ENCODE measurements at regions of chr7 and their contacts with region 1.

Region 1: DNA sequence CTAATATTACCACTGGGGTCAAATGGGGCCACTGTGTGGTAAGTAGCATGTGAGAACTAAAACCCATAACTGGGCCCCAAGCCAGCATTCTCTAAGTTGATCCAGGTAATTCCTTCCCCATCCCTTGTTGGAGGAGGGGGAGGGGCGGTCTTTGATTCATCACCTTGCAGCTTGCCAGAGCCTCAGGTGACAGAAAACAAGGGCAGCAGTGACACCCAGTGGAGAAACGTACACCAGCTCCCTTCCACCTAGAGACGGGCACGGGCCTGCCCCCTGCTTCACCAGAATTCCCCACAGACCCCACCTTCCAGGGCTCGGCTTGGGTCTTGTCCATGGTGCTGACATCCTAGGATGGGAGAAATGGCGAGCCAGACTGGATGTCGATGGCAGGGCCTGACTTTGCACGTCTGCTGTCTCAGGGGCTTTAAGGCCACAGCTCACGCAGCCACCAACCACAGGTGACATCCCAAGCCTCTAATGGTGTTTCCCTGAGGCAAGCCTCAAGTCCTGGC is 102.0 kb downstream of the STRA8 start:
- DNase-seq: peak; percentile 93 to 95
- H3K4me3 ChIP-seq: no peak overlapping the region
- H3K27ac ChIP-seq: no peak overlapping the region
- H3K4me1 ChIP-seq: peaks cover 0 to 4% (median 2%) of the 10 kb centered on the region in 4 experiments; a peak in 5 of 7 replicates
- H3K27me3 ChIP-seq: no peaks in the 10 kb centered on the region
- CTCF ChIP-seq: peak; percentile 90 to 98 (median 95)
- EP300 ChIP-seq: peak in 1 of 2 experiments; percentile 32; a peak in 1 of 3 replicates
- POLR2A ChIP-seq: no peak
- RAD21 ChIP-seq: peak; percentile 99 to 100

Region 2: DNA sequence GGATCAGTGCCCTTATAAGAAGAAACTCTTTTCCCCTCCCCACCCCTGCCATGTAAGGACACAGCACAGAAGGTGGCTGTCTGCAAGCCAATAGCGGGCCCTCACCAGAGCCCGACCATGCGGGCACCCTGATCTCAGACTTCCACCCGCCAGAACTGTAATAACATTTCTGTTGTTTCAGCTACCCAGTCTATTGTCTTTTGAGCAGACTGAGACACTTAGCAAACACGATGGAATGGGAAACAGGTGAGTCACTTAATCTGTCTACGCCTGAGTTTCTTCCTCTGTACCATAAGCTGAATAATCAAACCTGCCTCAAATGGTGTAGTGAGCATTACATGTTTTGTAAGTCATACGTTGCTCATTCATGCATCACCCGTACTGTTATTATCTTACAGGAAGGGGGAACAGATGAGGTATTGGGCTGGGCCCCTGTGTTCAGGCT is 43.9 kb before region 1 on chr7:
- CTCF ChIA-PET with region 1: interaction called, 34 read pairs
- POLR2A ChIA-PET with region 1: no interaction called
- DNase-seq: no peak
- H3K4me3 ChIP-seq: no peak overlapping the region
- H3K27ac ChIP-seq: no peak overlapping the region
- H3K4me1 ChIP-seq: no peaks in the 10 kb centered on the region
- H3K27me3 ChIP-seq: no peaks in the 10 kb centered on the region
- CTCF ChIP-seq: no peak
- EP300 ChIP-seq: no peak
- POLR2A ChIP-seq: no peak
- RAD21 ChIP-seq: no peak

Region 3: DNA sequence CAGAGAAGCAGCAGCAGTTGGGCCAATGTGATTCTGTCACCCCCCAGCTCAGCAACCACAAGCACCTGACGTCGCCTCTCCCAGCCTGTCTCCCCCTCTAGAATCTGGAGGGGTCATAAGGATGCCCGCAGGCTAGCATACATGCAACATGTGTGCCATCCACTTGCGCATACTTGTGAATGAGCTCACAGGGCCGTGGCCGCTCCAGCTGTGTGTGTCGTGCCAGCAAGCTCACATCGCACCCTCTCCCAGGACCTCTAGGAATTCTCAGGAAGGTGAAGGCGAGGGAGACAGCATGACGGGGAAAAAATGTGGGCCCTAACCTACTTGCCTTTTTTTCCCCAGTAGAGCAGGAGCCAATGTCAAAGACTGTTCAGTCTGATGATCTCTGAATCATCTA is 21.7 kb before region 1 on chr7:
- CTCF ChIA-PET with region 1: interaction called, 17 read pairs
- POLR2A ChIA-PET with region 1: no interaction called
- DNase-seq: no peak
- H3K4me3 ChIP-seq: no peak overlapping the region
- H3K27ac ChIP-seq: no peak overlapping the region
- H3K4me1 ChIP-seq: no peaks in the 10 kb centered on the region
- H3K27me3 ChIP-seq: no peaks in the 10 kb centered on the region
- CTCF ChIP-seq: no peak
- EP300 ChIP-seq: no peak
- POLR2A ChIP-seq: no peak
- RAD21 ChIP-seq: no peak

Region 4: GRCh38 chr7:135349746-135350379 is 14.2 kb after region 1 on chr7:
- CTCF ChIA-PET with region 1: interaction called, 11 read pairs
- POLR2A ChIA-PET with region 1: no interaction called
- DNase-seq: no peak
- H3K4me3 ChIP-seq: no peak overlapping the region
- H3K27ac ChIP-seq: no peak overlapping the region
- H3K4me1 ChIP-seq: no peaks in the 10 kb centered on the region
- H3K27me3 ChIP-seq: no peaks in the 10 kb centered on the region
- CTCF ChIP-seq: no peak
- EP300 ChIP-seq: no peak
- POLR2A ChIP-seq: no peak
- RAD21 ChIP-seq: no peak

Region 5: DNA sequence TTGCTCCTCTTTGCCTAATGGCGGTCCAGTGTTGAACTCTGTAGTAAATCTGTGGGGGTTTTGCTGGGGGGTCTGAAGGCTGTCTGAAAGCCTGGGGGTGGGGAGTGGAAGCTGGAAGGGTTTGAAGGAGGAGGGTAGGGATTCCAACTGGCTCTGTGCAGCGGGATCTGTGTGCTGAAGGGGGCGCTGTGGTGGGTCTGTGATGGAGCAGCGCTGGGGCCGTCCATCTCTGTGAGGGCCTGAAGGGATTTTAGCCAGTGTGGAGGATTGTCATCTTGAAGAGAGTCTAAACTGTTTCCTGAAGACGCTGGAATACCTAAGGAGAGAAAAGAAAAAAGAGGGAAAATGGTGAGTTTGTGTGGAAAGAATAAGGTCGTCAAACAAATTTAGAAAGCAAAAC is 27.2 kb after region 1 on chr7:
- CTCF ChIA-PET with region 1: interaction called, 20 read pairs
- POLR2A ChIA-PET with region 1: no interaction called
- DNase-seq: peak in 1 of 2 experiments; percentile 72
- H3K4me3 ChIP-seq: no peak overlapping the region
- H3K27ac ChIP-seq: no peak overlapping the region
- H3K4me1 ChIP-seq: no peaks in the 10 kb centered on the region
- H3K27me3 ChIP-seq: no peaks in the 10 kb centered on the region
- CTCF ChIP-seq: peak; percentile 60 to 78 (median 75)
- EP300 ChIP-seq: no peak
- POLR2A ChIP-seq: no peak
- RAD21 ChIP-seq: peak; percentile 26 to 44; a peak in 3 of 4 replicates

Region 6: GRCh38 chr7:135385209-135385608 is 49.5 kb after region 1 on chr7:
- CTCF ChIA-PET with region 1: no interaction called
- POLR2A ChIA-PET with region 1: no interaction called
- DNase-seq: no peak
- H3K4me3 ChIP-seq: no peak overlapping the region
- H3K27ac ChIP-seq: no peak overlapping the region
- H3K4me1 ChIP-seq: peaks cover 2 to 7% (median 5%) of the 10 kb centered on the region in 4 experiments; a peak in 6 of 7 replicates
- H3K27me3 ChIP-seq: no peaks in the 10 kb centered on the region
- CTCF ChIP-seq: no peak
- EP300 ChIP-seq: no peak
- POLR2A ChIP-seq: no peak
- RAD21 ChIP-seq: no peak

Measured in H1 (cell line).